ENCODE measurements at regions of chr20 and their contacts with region 1.

Region 1: DNA sequence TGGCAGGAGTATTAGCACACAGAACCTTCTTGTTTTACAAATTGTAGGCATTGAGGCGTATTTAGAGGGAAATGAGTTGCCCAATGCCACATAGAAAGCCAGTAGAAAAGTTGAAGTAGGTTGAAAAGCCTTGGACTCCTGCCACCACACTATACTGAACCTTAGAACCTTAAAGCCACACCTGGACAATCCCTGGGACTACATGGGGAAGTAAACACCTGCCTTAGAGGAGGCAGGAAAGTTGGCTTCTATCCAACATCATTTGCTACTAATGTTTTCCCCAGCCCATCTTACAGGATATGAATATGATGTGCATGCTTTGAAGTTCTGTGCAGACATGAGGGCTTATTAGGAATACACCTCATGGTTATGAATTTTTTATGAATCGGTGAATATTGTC is 5.3 kb upstream of the EPPIN start:
- DNase-seq: no peak
- H3K4me3 ChIP-seq: no peak overlapping the region
- H3K27ac ChIP-seq: no peak overlapping the region
- H3K4me1 ChIP-seq: no peaks in the 10 kb centered on the region
- H3K27me3 ChIP-seq: peaks cover 7% of the 10 kb centered on the region; the same call in 1 of the 2 replicates

Region 2: GRCh38 chr20:45500022-45500421 is 52.4 kb before region 1 on chr20:
- in situ Hi-C with region 1: loop called (anchors 5 kb)
- DNase-seq: no peak
- H3K4me3 ChIP-seq: no peak overlapping the region
- H3K27ac ChIP-seq: no peak overlapping the region
- H3K4me1 ChIP-seq: no peaks in the 10 kb centered on the region
- H3K27me3 ChIP-seq: peaks cover 16% of the 10 kb centered on the region; the same call in 1 of the 2 replicates

Region 3: GRCh38 chr20:45959956-45960630 is 407.6 kb after region 1 on chr20:
- in situ Hi-C with region 1: no loop called
- DNase-seq: no peak
- H3K4me3 ChIP-seq: no peak overlapping the region
- H3K27ac ChIP-seq: no peak overlapping the region
- H3K4me1 ChIP-seq: no peaks in the 10 kb centered on the region
- H3K27me3 ChIP-seq: no peaks in the 10 kb centered on the region

Measured in GM23248 (cell line).